ENCODE measurements at regions of chr20 and their contacts with region 1.

Region 1: GRCh38 chr20:5448449-5449118 is 131.8 kb upstream of the PROKR2 start:
- DNase-seq: no peak

Region 2: DNA sequence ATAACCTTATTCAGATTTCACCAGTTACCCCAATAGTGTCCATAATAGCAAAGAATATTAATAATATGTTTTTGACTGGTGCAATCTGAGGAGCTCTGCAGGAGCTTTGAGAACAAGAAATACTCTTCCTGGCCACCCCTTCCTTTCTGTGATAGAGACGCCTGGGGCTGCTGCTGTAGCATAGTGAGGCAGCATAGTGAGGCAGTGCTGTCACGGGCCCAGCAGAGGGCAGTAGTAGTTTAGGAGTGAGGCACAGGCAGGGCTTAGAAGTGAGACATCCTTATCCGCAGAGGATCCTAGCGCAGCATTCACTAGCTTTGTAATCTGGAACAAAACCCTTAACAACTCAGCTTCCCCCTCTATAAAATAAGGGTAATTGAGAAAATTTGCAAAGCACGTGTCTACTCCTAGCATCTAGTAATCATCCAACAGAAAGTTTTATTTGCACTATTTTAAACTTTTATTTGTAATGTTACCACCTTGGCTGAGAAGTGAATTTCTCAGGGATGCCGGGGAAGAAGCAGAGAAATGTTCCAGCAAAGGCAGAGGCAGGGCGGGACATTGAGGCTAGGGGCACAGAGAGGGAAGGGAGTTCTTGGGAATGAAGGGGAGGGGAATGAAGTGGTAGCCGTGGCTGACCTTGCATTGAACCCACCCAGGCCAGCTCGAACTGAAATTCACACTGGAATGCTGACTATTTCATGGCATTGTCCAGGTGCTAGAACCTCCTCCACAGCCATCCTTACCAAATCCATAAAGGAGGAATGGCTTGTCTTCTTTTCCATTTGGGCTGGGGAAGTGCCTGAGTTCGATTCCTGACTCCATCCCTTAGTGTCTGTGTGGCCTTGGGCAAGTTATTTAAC is 243.0 kb before region 1 on chr20:
- intact Hi-C with region 1: loop called (anchors 5 kb)
- DNase-seq: peak; percentile 87